ENCODE measurements at regions of chr3 and their contacts with region 1.

Region 1: GRCh38 chr3:153284282-153284938 is 122.4 kb downstream of the RAP2B start:
- DNase-seq: peak; percentile 72
- H3K4me3 ChIP-seq: no peak overlapping the region
- CTCF ChIP-seq: no peak

Region 2: GRCh38 chr3:153273767-153274435 is 10.5 kb before region 1 on chr3:
- CTCF ChIA-PET with region 1: interaction called, 16 read pairs
- POLR2A ChIA-PET with region 1: no interaction called
- DNase-seq: no peak
- H3K4me3 ChIP-seq: no peak overlapping the region
- CTCF ChIP-seq: no peak